PC-9 (cell line): ENCODE measurements at regions of chr3 and their contacts with region 1.

Region 1: GRCh38 chr3:31092748-31093551 is 198.5 kb upstream of the GADL1 start:
- DNase-seq: no peak
- H3K4me3 ChIP-seq: no peak overlapping the region
- H3K27ac ChIP-seq: no peak overlapping the region
- H3K4me1 ChIP-seq: no peaks in the 10 kb centered on the region
- H3K27me3 ChIP-seq: no peaks in the 10 kb centered on the region
- CTCF ChIP-seq: no peak

Region 2: GRCh38 chr3:31105438-31106077 is 12.6 kb after region 1 on chr3:
- CTCF ChIA-PET with region 1: interaction called, 13 read pairs
- POLR2A ChIA-PET with region 1: no interaction called
- intact Hi-C with region 1: no loop called
- DNase-seq: peak in 1 of 2 experiments; percentile 5
- H3K4me3 ChIP-seq: no peak overlapping the region
- H3K27ac ChIP-seq: no peak overlapping the region
- H3K4me1 ChIP-seq: no peaks in the 10 kb centered on the region
- H3K27me3 ChIP-seq: no peaks in the 10 kb centered on the region
- CTCF ChIP-seq: no peak